A673 (cell line): ENCODE measurements at regions of chr5 and their contacts with region 1.

Region 1: GRCh38 chr5:145834917-145835847 is at the start of gene PRELID2:
- DNase-seq: peak; percentile 96
- H3K4me3 ChIP-seq: peak within 1 kb of the TSS; percentile 66
- H3K27ac ChIP-seq: peak within 1 kb of the TSS; percentile 77
- H3K4me1 ChIP-seq: peaks cover 25% of the 10 kb centered on the region
- H3K27me3 ChIP-seq: no peaks in the 10 kb centered on the region
- CTCF ChIP-seq: no peak
- total RNA-seq, gene PRELID2: 50.2 and 55.8 TPM in 2 replicates

Region 2: DNA sequence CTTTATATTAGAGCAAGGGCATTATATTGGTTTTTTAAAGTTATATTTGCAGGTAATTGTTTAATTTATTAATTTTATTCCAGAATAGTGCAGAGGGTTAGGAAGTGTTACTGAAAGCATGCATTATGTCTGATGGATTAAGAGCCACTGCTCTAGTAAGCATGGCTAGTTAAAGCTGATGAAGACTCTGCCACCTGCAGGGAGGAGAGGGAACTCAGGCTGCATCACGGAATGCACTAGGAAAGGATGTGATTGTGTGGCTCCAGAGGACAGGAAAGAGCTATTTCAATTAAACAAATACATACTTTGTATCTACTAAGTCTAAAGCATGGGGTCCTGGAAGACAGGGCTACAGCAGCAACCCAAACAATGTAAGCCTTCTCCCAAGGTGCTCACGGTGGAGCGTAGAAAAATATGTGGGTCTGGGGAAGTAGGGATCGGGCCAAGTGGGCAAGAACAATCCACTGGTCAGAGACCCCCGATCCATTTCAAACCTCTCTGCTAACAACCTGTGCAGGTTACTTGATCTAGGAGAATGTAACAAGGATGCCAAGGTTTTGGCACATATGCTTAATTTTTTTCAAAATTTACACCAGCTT is 52.9 kb after region 1 on chr5:
- CTCF ChIA-PET with region 1: no interaction called
- POLR2A ChIA-PET with region 1: no interaction called
- intact Hi-C with region 1: loop called (anchors 5 kb)
- DNase-seq: peak; percentile 85
- H3K4me3 ChIP-seq: no peak overlapping the region
- H3K27ac ChIP-seq: no peak overlapping the region
- H3K4me1 ChIP-seq: no peaks in the 10 kb centered on the region
- H3K27me3 ChIP-seq: no peaks in the 10 kb centered on the region
- CTCF ChIP-seq: peak; percentile 93

Region 3: DNA sequence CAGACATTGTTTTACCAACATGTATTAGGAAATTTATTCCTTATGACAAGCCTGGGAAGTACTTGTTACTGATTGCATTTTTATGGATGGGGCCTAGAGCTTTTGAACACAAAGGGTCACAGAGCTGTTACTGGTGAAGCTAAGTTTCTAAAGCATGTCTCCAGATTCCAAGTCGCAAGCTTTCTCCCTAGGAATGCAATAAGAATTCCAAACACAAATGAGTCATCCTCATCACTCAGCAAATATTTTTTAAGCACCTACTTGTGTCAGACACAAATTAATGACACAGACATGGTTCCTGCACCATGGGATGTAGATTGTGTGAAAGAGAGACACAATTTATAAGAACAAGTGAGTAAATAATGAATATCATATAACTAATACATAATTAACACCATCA is 90.2 kb after region 1 on chr5:
- CTCF ChIA-PET with region 1: no interaction called
- POLR2A ChIA-PET with region 1: no interaction called
- intact Hi-C with region 1: loop called (anchors 5 kb)
- DNase-seq: peak; percentile 88
- H3K4me3 ChIP-seq: no peak overlapping the region
- H3K27ac ChIP-seq: peak overlapping the region; percentile 85
- H3K4me1 ChIP-seq: peaks cover 27% of the 10 kb centered on the region
- H3K27me3 ChIP-seq: no peaks in the 10 kb centered on the region
- CTCF ChIP-seq: no peak

Region 4: GRCh38 chr5:145946112-145946861 is 111.1 kb after region 1 on chr5:
- CTCF ChIA-PET with region 1: no interaction called
- POLR2A ChIA-PET with region 1: no interaction called
- intact Hi-C with region 1: no loop called
- DNase-seq: peak; percentile 60
- H3K4me3 ChIP-seq: no peak overlapping the region
- H3K27ac ChIP-seq: peak overlapping the region; percentile 63
- H3K4me1 ChIP-seq: peaks cover 43% of the 10 kb centered on the region
- H3K27me3 ChIP-seq: no peaks in the 10 kb centered on the region
- CTCF ChIP-seq: no peak